GM23248 (cell line): ENCODE measurements at regions of chr13 and their contacts with region 1.

Region 1: GRCh38 chr13:73835138-73835721 is 299.0 kb downstream of the KLF12 start:
- DNase-seq: peak; percentile 55
- H3K4me3 ChIP-seq: no peak overlapping the region
- H3K27ac ChIP-seq: no peak overlapping the region
- H3K4me1 ChIP-seq: peaks cover 3% of the 10 kb centered on the region; the same call in 1 of the 2 replicates
- H3K27me3 ChIP-seq: no peaks in the 10 kb centered on the region

Region 2: GRCh38 chr13:74287724-74288169 is 452.5 kb after region 1 on chr13:
- in situ Hi-C with region 1: loop called (anchors 25 kb)
- DNase-seq: peak; percentile 55
- H3K4me3 ChIP-seq: no peak overlapping the region
- H3K27ac ChIP-seq: no peak overlapping the region
- H3K4me1 ChIP-seq: peaks cover 10% of the 10 kb centered on the region; the same call in 1 of the 2 replicates
- H3K27me3 ChIP-seq: no peaks in the 10 kb centered on the region

Region 3: DNA sequence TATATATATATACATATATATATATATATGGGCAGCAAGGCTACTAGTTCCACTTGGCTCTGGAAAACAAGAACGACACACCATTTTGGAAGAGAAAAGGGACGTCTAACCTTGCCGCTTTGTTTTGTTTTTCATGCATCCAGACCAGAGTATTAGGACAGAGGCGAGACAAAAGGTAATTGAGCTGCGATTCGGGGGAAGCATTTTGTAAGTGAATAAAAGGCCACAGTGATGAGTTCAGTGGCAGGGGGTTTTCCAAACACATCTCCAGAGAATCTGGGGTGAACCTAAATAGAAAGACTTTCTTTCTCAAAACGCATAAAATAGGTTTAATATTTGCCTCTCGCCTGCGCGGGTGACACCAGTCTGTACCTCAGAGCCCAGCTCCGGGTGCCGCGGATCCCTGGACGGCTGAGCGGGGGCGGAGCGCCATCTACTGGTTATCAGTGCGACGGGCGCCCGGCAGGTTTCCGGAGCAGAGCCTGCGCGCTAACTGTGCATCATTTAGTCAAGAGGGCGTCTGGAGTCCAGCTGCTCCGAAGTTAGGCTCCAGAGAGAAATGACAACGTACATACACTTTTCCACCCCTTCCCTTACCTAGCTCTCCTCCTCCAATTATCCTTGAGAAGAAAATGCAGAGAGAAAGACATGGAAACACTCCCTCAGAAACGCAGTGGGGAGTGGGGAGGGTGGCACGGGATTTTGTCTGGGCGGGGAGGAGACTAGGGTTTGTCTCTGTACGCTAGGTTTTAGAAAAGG is 1384.4 kb after region 1 on chr13:
- in situ Hi-C with region 1: loop called (anchors 25 kb)
- DNase-seq: peak; percentile 86
- H3K4me3 ChIP-seq: peak overlapping the region; percentile 71
- H3K27ac ChIP-seq: no peak overlapping the region
- H3K4me1 ChIP-seq: peaks cover 11% of the 10 kb centered on the region; the same call in 1 of the 2 replicates
- H3K27me3 ChIP-seq: peaks cover 3% of the 10 kb centered on the region; the same call in 1 of the 2 replicates